PC-3 (cell line): ENCODE measurements at regions of chr6 and their contacts with region 1.

Region 1: GRCh38 chr6:75460681-75461080 is 32.9 kb downstream of the FILIP1 start:
- DNase-seq: no peak
- ATAC-seq: no peak
- H3K4me3 ChIP-seq: no peak overlapping the region
- H3K27ac ChIP-seq: no peak overlapping the region
- H3K4me1 ChIP-seq: no peaks in the 10 kb centered on the region
- H3K27me3 ChIP-seq: no peaks in the 10 kb centered on the region
- CTCF ChIP-seq: no peak

Region 2: GRCh38 chr6:75472885-75473284 is 12.2 kb after region 1 on chr6:
- CTCF ChIA-PET with region 1: no interaction called
- POLR2A ChIA-PET with region 1: no interaction called
- intact Hi-C with region 1: loop called (anchors 1 kb)
- DNase-seq: no peak
- ATAC-seq: no peak
- H3K4me3 ChIP-seq: no peak overlapping the region
- H3K27ac ChIP-seq: no peak overlapping the region
- H3K4me1 ChIP-seq: no peaks in the 10 kb centered on the region
- H3K27me3 ChIP-seq: no peaks in the 10 kb centered on the region
- CTCF ChIP-seq: no peak

Region 3: DNA sequence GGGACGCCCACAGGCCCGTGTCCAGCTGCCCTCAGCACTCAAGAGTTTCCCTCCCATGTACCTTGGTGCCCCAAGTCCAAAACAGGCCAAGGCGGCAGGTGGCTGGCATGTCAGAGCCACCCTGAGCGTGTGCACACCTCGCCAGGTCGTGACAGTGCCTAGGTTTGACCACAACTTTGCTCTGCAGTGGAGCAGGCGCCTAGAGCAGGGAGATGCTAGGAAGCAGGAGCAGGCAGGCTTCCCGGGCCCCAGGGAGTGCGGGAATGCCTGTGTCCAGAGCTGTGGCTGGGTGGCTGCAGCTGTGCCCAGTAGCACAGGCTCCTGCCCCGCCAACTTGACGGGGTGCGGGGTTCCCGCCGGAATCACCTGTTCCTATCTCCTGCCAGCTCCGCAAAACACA is 992.6 kb after region 1 on chr6:
- CTCF ChIA-PET with region 1: no interaction called
- POLR2A ChIA-PET with region 1: no interaction called
- intact Hi-C with region 1: no loop called
- DNase-seq: no peak
- ATAC-seq: no peak
- H3K4me3 ChIP-seq: no peak overlapping the region
- H3K27ac ChIP-seq: no peak overlapping the region
- H3K4me1 ChIP-seq: no peaks in the 10 kb centered on the region
- H3K27me3 ChIP-seq: no peaks in the 10 kb centered on the region
- CTCF ChIP-seq: no peak